ENCODE measurements at regions of chrX and their contacts with region 1.

Region 1: GRCh38 chrX:153032397-153033118 is 23.7 kb upstream of the PNMA3 start:
- DNase-seq: peak; percentile 72
- ATAC-seq: peak; percentile 84
- H3K4me3 ChIP-seq: peak overlapping the region in 4 of 5 experiments; percentile 40 to 67 (median 56)
- H3K4me3 Mint-ChIP-seq: peak overlapping the region; percentile 93
- H3K27ac ChIP-seq: peak overlapping the region; percentile 47 to 58
- H3K27ac Mint-ChIP-seq: peak overlapping the region; percentile 96
- H3K4me1 ChIP-seq: peaks cover 0 to 13% of the 10 kb centered on the region in 2 donors
- H3K4me1 Mint-ChIP-seq: peaks cover 11% of the 10 kb centered on the region
- H3K27me3 ChIP-seq: no peaks in the 10 kb centered on the region
- H3K27me3 Mint-ChIP-seq: no peaks in the 10 kb centered on the region
- CTCF ChIP-seq: peak; percentile 81

Region 2: DNA sequence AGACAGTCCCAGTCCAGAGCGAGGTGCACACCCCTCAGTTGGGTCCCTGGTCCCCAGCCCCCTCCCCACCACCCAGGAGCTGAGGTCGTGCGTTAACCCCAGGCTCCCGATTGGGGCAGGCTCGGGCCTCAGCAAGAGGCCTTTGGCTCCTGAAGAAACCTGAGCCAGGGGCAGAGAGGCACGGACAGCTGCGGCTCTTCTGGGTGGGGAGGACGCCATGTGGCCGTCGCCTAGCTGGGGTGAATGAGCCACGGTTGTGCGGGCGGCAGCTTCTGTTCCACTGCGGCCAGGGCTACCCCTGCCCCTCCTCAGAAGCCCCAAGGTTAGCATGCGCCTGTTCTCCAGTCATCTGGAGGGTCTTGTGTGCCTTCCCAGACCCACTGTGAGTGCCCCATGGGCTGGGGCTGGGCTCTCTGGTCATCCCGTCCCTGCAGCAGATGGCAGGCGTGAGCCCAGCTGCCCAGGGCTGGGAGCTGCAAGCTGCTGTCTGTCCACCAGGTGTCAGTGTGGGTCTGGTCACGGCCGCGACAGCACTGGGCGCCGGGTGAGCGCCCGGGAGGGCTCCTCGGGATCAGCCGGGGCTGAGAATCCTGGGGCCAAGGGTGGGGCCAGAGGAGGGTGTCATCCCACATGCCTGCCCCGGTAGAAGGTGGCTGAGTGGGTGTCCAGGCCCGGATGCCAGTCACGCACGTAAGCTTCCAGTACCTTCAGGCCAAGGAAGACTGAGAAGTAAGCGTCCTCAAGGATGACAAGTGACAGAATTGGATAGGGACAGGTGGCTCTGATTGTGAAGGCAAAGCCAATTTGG is 506.8 kb after region 1 on chrX:
- CTCF ChIA-PET with region 1: interaction called, 10 read pairs
- POLR2A ChIA-PET with region 1: interaction called, 3 read pairs
- intact Hi-C with region 1: no loop called
- DNase-seq: peak; percentile 68
- ATAC-seq: peak; percentile 93
- H3K4me3 ChIP-seq: no peak overlapping the region
- H3K4me3 Mint-ChIP-seq: no peak overlapping the region
- H3K27ac ChIP-seq: no peak overlapping the region
- H3K27ac Mint-ChIP-seq: no peak overlapping the region
- H3K4me1 ChIP-seq: peaks cover 0 to 3% of the 10 kb centered on the region in 2 donors
- H3K4me1 Mint-ChIP-seq: no peaks in the 10 kb centered on the region
- H3K27me3 ChIP-seq: no peaks in the 10 kb centered on the region
- H3K27me3 Mint-ChIP-seq: peaks cover 3% of the 10 kb centered on the region
- CTCF ChIP-seq: peak; percentile 76